Cardiac septum (tissue), 1 donor: ENCODE measurements at regions of chr10 and their contacts with region 1.

Region 1: GRCh38 chr10:43878386-43878785 is 229.7 kb upstream of the ZNF32 start:
- DNase-seq: peak; percentile 89

Region 2: GRCh38 chr10:43707770-43708169 is 170.6 kb before region 1 on chr10:
- intact Hi-C with region 1: no loop called
- DNase-seq: peak; percentile 86

Region 3: DNA sequence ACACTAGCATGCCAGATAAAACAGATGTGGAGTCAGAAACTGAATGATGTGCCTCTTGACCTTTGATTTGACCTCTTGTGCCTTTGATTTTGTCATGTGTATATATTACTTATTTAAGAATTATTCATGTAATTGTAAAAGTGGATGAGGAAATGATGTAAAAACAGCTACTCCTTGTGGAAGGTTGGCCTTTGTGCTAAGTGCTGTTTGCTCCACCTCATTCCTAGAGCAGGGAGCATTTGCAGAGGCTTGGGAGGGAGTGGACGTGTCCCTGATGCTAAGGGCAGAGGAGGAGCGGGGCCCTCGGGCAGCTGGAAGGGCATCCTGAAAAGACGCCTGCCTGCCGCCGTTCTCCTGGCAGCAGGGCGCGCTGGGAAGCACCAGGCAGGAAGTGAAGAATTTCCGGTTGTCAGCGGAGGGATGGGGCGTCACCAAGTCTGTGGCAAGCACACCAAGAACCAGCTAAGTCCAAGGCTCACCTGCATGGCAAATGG is 32.2 kb before region 1 on chr10:
- intact Hi-C with region 1: loop called (anchors 2 kb)
- DNase-seq: peak; percentile 81